Colonic mucosa (tissue), 4 donors: ENCODE measurements at regions of chr10 and their contacts with region 1.

Region 1: GRCh38 chr10:76547352-76547972 is 1090.1 kb downstream of the KCNMA1 start:
- DNase-seq: peak; percentile 86
- H3K4me3 ChIP-seq: no peak overlapping the region
- H3K27ac ChIP-seq: no peak overlapping the region
- H3K4me1 ChIP-seq: no peaks in the 10 kb centered on the region
- H3K27me3 ChIP-seq: no peaks in the 10 kb centered on the region
- CTCF ChIP-seq: peak; percentile 64

Region 2: GRCh38 chr10:76218035-76218434 is 329.4 kb before region 1 on chr10:
- intact Hi-C with region 1: no loop called
- DNase-seq: no peak
- H3K4me3 ChIP-seq: no peak overlapping the region
- H3K27ac ChIP-seq: no peak overlapping the region
- H3K4me1 ChIP-seq: no peaks in the 10 kb centered on the region
- H3K27me3 ChIP-seq: no peaks in the 10 kb centered on the region
- CTCF ChIP-seq: no peak

Region 3: GRCh38 chr10:76324283-76324682 is 223.2 kb before region 1 on chr10:
- intact Hi-C with region 1: loop called (anchors 10 kb)
- DNase-seq: peak; percentile 64
- H3K4me3 ChIP-seq: no peak overlapping the region
- H3K27ac ChIP-seq: no peak overlapping the region
- H3K4me1 ChIP-seq: no peaks in the 10 kb centered on the region
- H3K27me3 ChIP-seq: no peaks in the 10 kb centered on the region
- CTCF ChIP-seq: no peak

Region 4: GRCh38 chr10:76786504-76787072 is 239.1 kb after region 1 on chr10:
- intact Hi-C with region 1: no loop called
- DNase-seq: no peak
- H3K4me3 ChIP-seq: no peak overlapping the region
- H3K27ac ChIP-seq: no peak overlapping the region
- H3K4me1 ChIP-seq: no peaks in the 10 kb centered on the region
- H3K27me3 ChIP-seq: no peaks in the 10 kb centered on the region
- CTCF ChIP-seq: no peak

Region 5: DNA sequence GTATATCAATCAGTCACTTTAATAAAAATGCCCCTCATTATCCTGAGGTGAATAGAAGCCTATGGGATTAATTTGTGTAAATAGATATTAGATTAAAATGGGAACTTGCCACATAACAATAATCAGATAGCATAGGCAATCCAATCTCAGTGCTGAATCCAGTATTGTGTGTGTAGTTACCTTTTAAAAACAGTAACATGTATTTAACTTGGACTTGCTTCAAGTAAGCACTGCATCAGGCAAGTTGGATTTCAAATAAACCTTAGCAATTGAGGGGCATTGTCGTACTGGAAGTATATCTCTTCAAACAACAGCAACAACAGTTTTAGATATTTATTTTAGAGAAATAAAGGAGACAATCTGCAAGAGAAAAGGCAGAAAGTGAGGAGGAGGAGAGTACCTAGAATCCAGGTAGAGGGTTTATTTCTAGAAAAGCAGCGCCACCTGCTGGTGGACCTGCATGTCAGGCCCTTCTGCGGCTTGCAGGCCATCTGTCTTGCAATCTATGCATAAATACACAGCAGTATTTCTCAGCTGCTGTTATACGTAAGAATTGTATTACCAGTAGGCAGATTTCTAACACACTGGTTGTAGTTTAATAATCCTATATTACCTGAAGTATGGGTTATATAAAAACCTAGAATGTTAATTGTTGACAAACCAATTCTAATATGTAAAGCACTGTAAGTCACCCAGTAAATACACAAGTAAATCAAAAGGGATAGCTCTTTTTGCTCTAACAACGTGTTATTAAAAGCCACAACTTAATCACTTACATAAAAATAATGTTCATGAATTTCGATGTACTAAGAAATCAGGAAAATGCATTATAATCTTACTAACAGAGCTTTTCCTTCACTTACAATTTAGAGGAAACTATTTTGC is 437.3 kb after region 1 on chr10:
- intact Hi-C with region 1: loop called (anchors 5 kb)
- DNase-seq: peak; percentile 72
- H3K4me3 ChIP-seq: no peak overlapping the region
- H3K27ac ChIP-seq: no peak overlapping the region
- H3K4me1 ChIP-seq: no peaks in the 10 kb centered on the region
- H3K27me3 ChIP-seq: no peaks in the 10 kb centered on the region
- CTCF ChIP-seq: peak; percentile 92